Head of caudate nucleus (tissue), 42 donors: ENCODE measurements at regions of chr3 and their contacts with region 1.

Region 1: DNA sequence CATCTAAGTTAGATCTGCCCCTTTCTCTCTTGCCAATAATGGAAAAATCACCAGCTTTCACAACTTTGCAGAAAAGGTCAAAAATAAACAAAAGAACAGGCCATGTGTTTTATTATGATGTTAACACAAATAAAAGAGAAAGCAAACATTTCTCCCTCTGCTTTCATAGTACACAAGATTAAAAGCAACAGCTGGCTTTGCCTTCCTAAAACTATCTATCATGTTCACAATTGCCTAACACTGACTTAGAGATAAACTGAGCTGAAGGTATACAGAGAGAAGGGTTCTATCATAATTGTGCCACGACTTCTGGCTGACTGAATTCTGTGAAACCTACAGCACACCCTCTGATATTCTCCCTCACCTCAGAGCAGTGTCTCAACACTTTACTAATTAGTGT is 29.4 kb downstream of the AADAC start:
- DNase-seq: no peak

Region 2: DNA sequence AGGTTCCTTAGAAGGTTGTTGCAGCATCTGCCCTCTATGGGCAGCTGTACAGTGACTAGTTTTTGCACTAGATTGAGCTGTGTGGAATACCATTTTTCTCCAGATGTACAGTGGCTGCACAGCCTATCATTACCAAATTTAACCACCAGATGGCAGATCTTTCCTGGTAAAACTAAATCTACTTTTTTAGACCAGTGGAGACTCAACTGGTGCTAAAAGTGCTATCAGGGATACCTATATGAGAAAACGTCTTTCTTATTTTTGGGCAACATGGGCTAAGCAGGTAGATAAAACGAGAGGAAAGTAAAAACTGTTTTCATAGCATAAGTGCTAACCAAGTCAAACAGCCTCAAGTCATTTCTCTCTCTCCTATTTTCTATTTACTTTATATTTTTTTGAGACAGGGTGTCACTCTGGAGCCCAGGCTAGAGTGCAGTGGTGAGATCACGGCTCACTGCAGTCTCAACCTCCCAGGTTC is 403.6 kb before region 1 on chr3:
- intact Hi-C with region 1: loop called (anchors 5 kb)
- DNase-seq: peak in 16 of 42 donors; percentile 15 to 73 (median 36)

Region 3: DNA sequence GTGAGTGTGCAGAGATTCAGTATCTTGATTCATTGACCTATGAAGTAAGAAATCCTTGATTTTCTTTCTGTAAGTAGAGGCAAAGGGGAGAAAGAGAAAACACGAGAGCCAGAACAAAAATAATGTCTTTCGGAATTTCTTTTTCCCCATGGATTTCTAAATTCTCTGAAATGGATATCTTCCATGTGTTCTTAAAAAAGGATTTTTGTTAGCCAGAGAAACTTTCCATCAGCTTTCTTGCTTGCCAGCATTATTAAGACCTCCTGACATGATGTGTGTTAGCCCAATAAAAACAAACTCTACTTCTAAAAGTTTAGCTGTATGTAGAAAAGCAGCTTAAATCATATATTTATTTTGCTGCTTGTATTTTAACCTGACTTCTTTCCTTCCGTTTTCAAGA is 231.9 kb before region 1 on chr3:
- intact Hi-C with region 1: no loop called
- DNase-seq: no peak